Thyroid gland (tissue), 4 donors: ENCODE measurements at regions of chr9 and their contacts with region 1.

Region 1: GRCh38 chr9:126500684-126501382 is 112.9 kb upstream of the LMX1B start:
- DNase-seq: peak; percentile 73 to 79
- H3K4me3 ChIP-seq: no peak overlapping the region
- H3K27ac ChIP-seq: no peak overlapping the region
- H3K4me1 ChIP-seq: peaks cover 6 to 15% of the 10 kb centered on the region in 2 donors
- H3K27me3 ChIP-seq: no peaks in the 10 kb centered on the region
- CTCF ChIP-seq: peak; percentile 83 to 99 (median 94)
- POLR2A ChIP-seq: no peak

Region 2: GRCh38 chr9:126293522-126293889 is 207.3 kb before region 1 on chr9:
- intact Hi-C with region 1: no loop called
- DNase-seq: no peak
- H3K4me3 ChIP-seq: no peak overlapping the region
- H3K27ac ChIP-seq: no peak overlapping the region
- H3K4me1 ChIP-seq: no peaks in the 10 kb centered on the region
- H3K27me3 ChIP-seq: no peaks in the 10 kb centered on the region
- CTCF ChIP-seq: no peak
- POLR2A ChIP-seq: no peak

Region 3: GRCh38 chr9:126448865-126449537 is 51.8 kb before region 1 on chr9:
- intact Hi-C with region 1: no loop called
- DNase-seq: no peak
- H3K4me3 ChIP-seq: no peak overlapping the region
- H3K27ac ChIP-seq: no peak overlapping the region
- H3K4me1 ChIP-seq: no peaks in the 10 kb centered on the region
- H3K27me3 ChIP-seq: no peaks in the 10 kb centered on the region
- CTCF ChIP-seq: no peak
- POLR2A ChIP-seq: no peak

Region 4: GRCh38 chr9:126558051-126558665 is 57.3 kb after region 1 on chr9:
- intact Hi-C with region 1: loop called (anchors 5 kb)
- DNase-seq: peak; percentile 75 to 85
- H3K4me3 ChIP-seq: no peak overlapping the region
- H3K27ac ChIP-seq: no peak overlapping the region
- H3K4me1 ChIP-seq: peaks cover 0 to 3% of the 10 kb centered on the region in 2 donors
- H3K27me3 ChIP-seq: no peaks in the 10 kb centered on the region
- CTCF ChIP-seq: peak; percentile 89 to 97 (median 95)
- POLR2A ChIP-seq: no peak

Region 5: DNA sequence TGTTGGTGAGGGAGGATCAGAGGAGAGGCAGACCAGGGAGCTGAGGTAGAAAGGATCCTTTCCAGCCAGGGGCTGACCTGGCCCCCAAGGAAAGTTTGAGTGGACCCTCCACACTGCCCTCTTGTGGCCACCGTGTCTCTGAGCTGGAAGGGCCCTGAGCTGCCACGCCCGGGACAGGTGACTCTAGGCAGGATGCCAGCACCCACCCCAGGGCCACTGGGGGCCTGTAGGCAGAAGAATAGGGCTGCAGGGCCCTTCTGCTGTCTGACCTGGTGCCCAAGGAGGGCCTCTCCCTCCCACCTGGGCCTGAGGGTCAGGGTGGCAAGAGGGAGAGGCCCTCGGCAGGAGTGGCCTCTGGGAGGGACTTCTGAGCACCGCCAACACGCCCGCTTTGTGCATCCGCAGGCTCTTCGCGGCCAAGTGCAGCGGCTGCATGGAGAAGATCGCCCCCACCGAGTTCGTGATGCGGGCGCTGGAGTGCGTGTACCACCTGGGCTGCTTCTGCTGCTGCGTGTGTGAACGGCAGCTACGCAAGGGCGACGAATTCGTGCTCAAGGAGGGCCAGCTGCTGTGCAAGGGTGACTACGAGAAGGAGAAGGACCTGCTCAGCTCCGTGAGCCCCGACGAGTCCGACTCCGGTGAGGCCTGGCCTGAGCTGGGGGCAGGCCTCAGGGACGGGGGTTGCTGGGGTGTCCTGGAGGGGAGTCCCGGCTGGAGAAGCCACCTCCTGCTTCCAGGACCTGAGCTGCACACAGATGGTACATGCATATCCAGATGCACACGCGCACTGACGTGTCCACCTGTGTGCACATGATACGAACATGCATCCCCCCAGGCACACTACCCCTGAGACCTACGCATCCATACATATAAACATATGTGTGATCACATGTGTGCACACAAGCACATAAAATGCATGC is 189.9 kb after region 1 on chr9:
- intact Hi-C with region 1: loop called (anchors 10 kb)
- DNase-seq: peak; percentile 53 to 54
- H3K4me3 ChIP-seq: no peak overlapping the region
- H3K27ac ChIP-seq: no peak overlapping the region
- H3K4me1 ChIP-seq: no peaks in the 10 kb centered on the region
- H3K27me3 ChIP-seq: no peaks in the 10 kb centered on the region
- CTCF ChIP-seq: peak; percentile 39 to 73 (median 50)
- POLR2A ChIP-seq: no peak

Region 6: GRCh38 chr9:126781186-126782052 is 280.6 kb after region 1 on chr9:
- intact Hi-C with region 1: loop called (anchors 10 kb)
- DNase-seq: peak; percentile 82 to 83
- H3K4me3 ChIP-seq: no peak overlapping the region
- H3K27ac ChIP-seq: no peak overlapping the region
- H3K4me1 ChIP-seq: peaks cover 0 to 4% of the 10 kb centered on the region in 2 donors
- H3K27me3 ChIP-seq: no peaks in the 10 kb centered on the region
- CTCF ChIP-seq: peak; percentile 87 to 95 (median 92)
- POLR2A ChIP-seq: no peak